ENCODE measurements at regions of chr4 and their contacts with region 1.

Region 1: GRCh38 chr4:25439918-25440477 is 62.9 kb downstream of the ANAPC4 start:
- DNase-seq: peak in 3 of 5 donors; percentile 42 to 48 (median 44)
- H3K4me3 ChIP-seq: no peak overlapping the region
- H3K27ac ChIP-seq: no peak overlapping the region
- H3K4me1 ChIP-seq: peaks cover 8% of the 10 kb centered on the region
- H3K27me3 ChIP-seq: no peaks in the 10 kb centered on the region
- CTCF ChIP-seq: peak; percentile 21 to 48 (median 29)
- EP300 ChIP-seq: no peak
- POLR2A ChIP-seq: no peak

Region 2: DNA sequence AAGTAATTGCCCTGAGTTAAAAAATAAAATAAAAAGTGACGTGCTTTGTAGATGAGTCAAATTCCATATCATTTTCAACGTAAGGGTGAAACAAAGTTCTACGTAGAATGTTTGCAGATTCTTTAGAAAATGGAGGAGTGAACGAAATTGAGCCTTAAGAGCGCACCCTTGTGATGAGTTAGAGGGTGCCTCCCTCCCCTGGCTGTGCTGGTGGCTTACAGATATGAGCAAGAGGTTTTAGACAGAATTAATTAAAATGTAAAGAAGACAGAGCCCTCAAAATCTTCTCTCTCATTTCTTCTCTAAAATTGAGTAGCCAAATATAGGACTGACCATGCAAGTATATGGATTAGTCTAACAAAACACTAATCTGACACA is 379.0 kb before region 1 on chr4:
- intact Hi-C with region 1: no loop called
- DNase-seq: no peak
- H3K4me3 ChIP-seq: no peak overlapping the region
- H3K27ac ChIP-seq: peak overlapping the region; percentile 1 to 47
- H3K4me1 ChIP-seq: no peaks in the 10 kb centered on the region
- H3K27me3 ChIP-seq: no peaks in the 10 kb centered on the region
- CTCF ChIP-seq: no peak
- EP300 ChIP-seq: no peak
- POLR2A ChIP-seq: no peak

Region 3: DNA sequence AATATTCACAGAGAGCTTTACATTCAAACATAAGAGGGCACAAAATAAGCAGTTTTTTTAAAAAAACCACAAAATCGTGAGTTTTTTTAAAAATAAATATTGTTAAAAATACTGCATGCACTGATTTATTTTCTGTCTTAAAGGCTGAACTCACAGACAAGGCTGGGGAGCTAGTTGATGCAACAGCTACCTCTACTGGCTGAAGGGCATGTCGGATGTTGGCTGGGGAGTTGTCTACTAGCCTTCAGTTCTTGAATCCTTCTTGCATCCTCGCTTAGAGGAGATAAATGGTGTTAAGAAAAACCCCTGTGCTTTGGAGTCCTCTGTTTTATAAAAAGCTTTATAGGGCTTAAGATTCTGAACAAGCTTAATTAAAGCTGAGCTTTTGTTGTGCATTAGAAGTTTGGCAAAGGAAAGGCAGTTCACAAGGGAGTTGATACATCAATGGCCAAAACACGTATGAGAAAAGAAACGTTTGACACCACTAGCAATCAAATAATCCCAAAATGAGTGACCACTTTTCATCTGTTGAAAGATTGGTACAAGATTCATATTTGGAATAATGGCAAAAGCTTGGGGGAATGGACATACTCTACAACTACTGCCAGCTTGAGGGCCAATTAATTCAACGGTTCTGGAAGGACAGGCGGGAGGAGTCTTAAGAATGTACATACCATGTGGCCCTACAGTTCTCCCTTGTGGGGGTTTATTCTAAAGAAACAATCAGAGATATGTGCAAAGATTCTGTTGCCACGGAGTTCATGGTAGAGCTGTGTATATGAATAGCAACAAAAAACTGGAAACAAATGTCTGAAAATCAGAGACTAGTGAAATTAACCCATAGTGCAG is 328.1 kb after region 1 on chr4:
- intact Hi-C with region 1: loop called in 1 of 4 experiments (anchors 10 kb)
- DNase-seq: peak; percentile 39 to 54 (median 48)
- H3K4me3 ChIP-seq: no peak overlapping the region
- H3K27ac ChIP-seq: no peak overlapping the region
- H3K4me1 ChIP-seq: peaks cover 1% of the 10 kb centered on the region
- H3K27me3 ChIP-seq: no peaks in the 10 kb centered on the region
- CTCF ChIP-seq: peak in 2 of 3 donors; percentile 25 to 58
- EP300 ChIP-seq: no peak
- POLR2A ChIP-seq: no peak